CD4-positive, alpha-beta memory T cell (primary cell): ENCODE measurements at regions of chr6 and their contacts with region 1.

Region 1: GRCh38 chr6:125779924-125780539 is 10.7 kb upstream of the NCOA7 start:
- DNase-seq: peak; percentile 87 to 94 (median 92)
- H3K4me3 ChIP-seq: peak overlapping the region; percentile 69 to 92
- H3K4me3 Mint-ChIP-seq: no peak overlapping the region
- H3K27ac ChIP-seq: peak overlapping the region; percentile 72
- H3K27ac Mint-ChIP-seq: no peak overlapping the region
- H3K4me1 ChIP-seq: peaks cover 17% of the 10 kb centered on the region
- H3K4me1 Mint-ChIP-seq: peaks cover 10 to 13% (median 12%) of the 10 kb centered on the region in 4 donors
- H3K27me3 ChIP-seq: no peaks in the 10 kb centered on the region
- H3K27me3 Mint-ChIP-seq: no peaks in the 10 kb centered on the region

Region 2: GRCh38 chr6:125301435-125302391 is 478.3 kb before region 1 on chr6 and contains the start of gene HDDC2:
- CTCF ChIA-PET with region 1: interaction called, 6 read pairs
- POLR2A ChIA-PET with region 1: interaction called, 25 read pairs
- intact Hi-C with region 1: loop called (anchors 5 kb)
- DNase-seq: peak in 4 of 5 donors; percentile 32 to 43 (median 37)
- H3K4me3 ChIP-seq: peak within 1 kb of the TSS; percentile 44 to 62
- H3K4me3 Mint-ChIP-seq: peak within 1 kb of the TSS; percentile 82 to 97 (median 92)
- H3K27ac ChIP-seq: peak within 1 kb of the TSS; percentile 62
- H3K27ac Mint-ChIP-seq: peak within 1 kb of the TSS; percentile 78 to 97 (median 94)
- H3K4me1 ChIP-seq: peaks cover 47% of the 10 kb centered on the region
- H3K4me1 Mint-ChIP-seq: peaks cover 44 to 59% (median 54%) of the 10 kb centered on the region in 4 donors
- H3K27me3 ChIP-seq: no peaks in the 10 kb centered on the region
- H3K27me3 Mint-ChIP-seq: no peaks in the 10 kb centered on the region
- total RNA-seq, gene HDDC2: 49.5 to 53.5 TPM

Region 3: GRCh38 chr6:125834348-125834747 is 54.3 kb after region 1 on chr6:
- CTCF ChIA-PET with region 1: interaction called, 8 read pairs
- POLR2A ChIA-PET with region 1: interaction called, 25 read pairs
- intact Hi-C with region 1: loop called (anchors 2 kb)
- DNase-seq: peak in 4 of 5 donors; percentile 24 to 50 (median 38)
- H3K4me3 ChIP-seq: no peak overlapping the region
- H3K4me3 Mint-ChIP-seq: peak overlapping the region; percentile 16 to 78 (median 40)
- H3K27ac ChIP-seq: no peak overlapping the region
- H3K27ac Mint-ChIP-seq: peak overlapping the region; percentile 49 to 95 (median 81)
- H3K4me1 ChIP-seq: peaks cover 62% of the 10 kb centered on the region
- H3K4me1 Mint-ChIP-seq: peaks cover 54 to 78% (median 64%) of the 10 kb centered on the region in 4 donors
- H3K27me3 ChIP-seq: no peaks in the 10 kb centered on the region
- H3K27me3 Mint-ChIP-seq: no peaks in the 10 kb centered on the region

Region 4: DNA sequence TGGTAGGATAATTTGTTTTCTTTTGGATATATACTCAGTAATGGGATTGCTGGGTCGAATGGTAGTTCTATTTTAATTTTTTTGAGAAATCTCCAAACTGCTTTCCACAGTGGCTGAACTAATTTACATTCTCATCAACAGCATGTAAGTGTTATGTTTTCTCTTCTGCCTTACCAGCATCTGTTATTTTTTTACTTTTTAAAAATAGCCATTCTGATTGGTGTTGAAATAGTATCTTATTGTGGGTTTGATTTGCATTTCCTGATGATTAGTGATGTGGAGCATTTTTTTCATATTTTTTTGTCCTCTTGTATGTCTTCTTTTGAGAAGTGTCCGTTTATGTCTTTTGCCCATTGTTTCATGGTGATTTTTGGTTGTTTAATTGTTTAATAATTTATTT is 188.5 kb after region 1 on chr6:
- CTCF ChIA-PET with region 1: interaction called, 21 read pairs
- POLR2A ChIA-PET with region 1: interaction called, 7 read pairs
- intact Hi-C with region 1: no loop called
- DNase-seq: no peak
- H3K4me3 ChIP-seq: no peak overlapping the region
- H3K4me3 Mint-ChIP-seq: no peak overlapping the region
- H3K27ac ChIP-seq: no peak overlapping the region
- H3K27ac Mint-ChIP-seq: peak overlapping the region in 1 of 7 donors; percentile 70
- H3K4me1 ChIP-seq: no peaks in the 10 kb centered on the region
- H3K4me1 Mint-ChIP-seq: peaks cover 7 to 26% (median 21%) of the 10 kb centered on the region in 4 donors
- H3K27me3 ChIP-seq: no peaks in the 10 kb centered on the region
- H3K27me3 Mint-ChIP-seq: no peaks in the 10 kb centered on the region

Region 5: DNA sequence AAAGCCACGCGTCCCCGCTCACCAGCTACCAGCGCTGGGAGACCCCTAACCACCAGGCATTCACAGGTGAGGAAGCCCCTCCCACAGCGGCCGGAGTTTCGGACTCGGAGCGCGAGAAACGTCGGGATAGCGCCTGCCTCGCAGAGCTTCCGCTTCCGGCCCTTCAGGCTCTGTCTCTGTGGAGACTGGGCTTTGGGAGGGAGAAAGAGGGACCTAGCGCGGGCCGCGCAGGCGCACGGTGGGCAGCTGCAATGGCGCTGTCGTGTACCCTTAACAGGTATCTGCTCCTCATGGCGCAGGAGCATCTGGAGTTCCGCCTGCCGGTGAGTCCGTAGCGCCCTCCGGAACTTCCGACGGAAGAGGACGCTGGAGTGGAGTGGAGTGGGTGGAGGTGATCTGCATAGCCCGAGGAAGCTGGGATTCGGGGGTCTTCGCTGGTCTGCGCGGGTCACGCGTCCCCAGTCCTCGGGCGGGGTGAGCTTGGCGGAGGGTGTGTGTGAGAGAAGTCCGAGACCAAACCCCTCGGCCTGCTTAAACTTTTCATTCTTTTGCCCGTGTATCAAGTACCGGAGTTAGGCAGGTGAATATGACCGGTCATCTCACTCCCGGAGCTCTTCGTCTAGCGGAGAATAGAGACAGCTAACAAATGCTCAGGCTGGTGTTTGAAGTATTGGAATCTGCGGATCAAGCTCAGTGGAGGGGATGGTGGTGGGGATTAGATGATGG is 206.4 kb after region 1 on chr6 and contains the start of gene TRMT11:
- CTCF ChIA-PET with region 1: interaction called, 12 read pairs
- POLR2A ChIA-PET with region 1: interaction called, 34 read pairs
- intact Hi-C with region 1: loop called (anchors 1 kb)
- DNase-seq: peak; percentile 80 to 86 (median 81)
- H3K4me3 ChIP-seq: peak within 1 kb of the TSS; percentile 93 to 95
- H3K4me3 Mint-ChIP-seq: peak within 1 kb of the TSS; percentile 6 to 57 (median 24)
- H3K27ac ChIP-seq: peak within 1 kb of the TSS; percentile 77
- H3K27ac Mint-ChIP-seq: no peak within 1 kb of the TSS
- H3K4me1 ChIP-seq: peaks cover 31% of the 10 kb centered on the region
- H3K4me1 Mint-ChIP-seq: peaks cover 2 to 15% (median 8%) of the 10 kb centered on the region in 4 donors
- H3K27me3 ChIP-seq: no peaks in the 10 kb centered on the region
- H3K27me3 Mint-ChIP-seq: no peaks in the 10 kb centered on the region
- total RNA-seq, gene TRMT11: 25.5 to 30.8 TPM

Region 6: DNA sequence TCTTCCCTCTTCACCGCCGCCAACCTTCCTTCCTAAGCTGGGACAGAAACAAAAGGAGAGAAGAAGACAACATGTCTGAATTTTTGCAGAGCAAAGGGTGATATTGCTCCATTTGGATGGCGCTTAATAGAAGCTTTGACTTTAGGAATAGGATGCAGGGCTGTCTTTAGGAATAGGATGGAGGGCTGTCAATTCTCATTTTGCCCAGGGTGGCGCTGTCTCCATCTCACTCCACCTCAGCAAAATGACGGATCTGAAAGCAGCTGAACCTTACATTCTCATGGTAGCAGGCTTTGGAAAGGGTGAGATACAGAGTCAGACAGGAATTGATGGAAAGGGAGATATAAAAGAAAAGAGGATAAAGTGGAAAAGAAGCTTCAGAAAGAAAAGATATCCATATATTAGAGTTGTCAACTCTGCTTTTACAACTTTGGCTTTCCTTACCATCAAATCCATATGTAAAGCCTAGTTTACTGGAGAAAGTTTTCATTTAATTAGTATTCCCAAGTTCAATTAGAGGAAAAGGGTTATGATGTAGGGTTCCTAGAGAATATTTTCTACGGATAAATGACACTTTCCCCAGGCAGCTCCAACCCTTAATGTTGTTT is 1736.7 kb after region 1 on chr6:
- CTCF ChIA-PET with region 1: no interaction called
- POLR2A ChIA-PET with region 1: interaction called, 3 read pairs
- intact Hi-C with region 1: loop called (anchors 5 kb)
- DNase-seq: peak in 4 of 5 donors; percentile 51 to 60 (median 53)
- H3K4me3 ChIP-seq: peak overlapping the region; percentile 54 to 61
- H3K4me3 Mint-ChIP-seq: peak overlapping the region; percentile 83 to 96 (median 92)
- H3K27ac ChIP-seq: peak overlapping the region; percentile 50
- H3K27ac Mint-ChIP-seq: peak overlapping the region; percentile 43 to 93 (median 88)
- H3K4me1 ChIP-seq: peaks cover 40% of the 10 kb centered on the region
- H3K4me1 Mint-ChIP-seq: peaks cover 26 to 51% (median 38%) of the 10 kb centered on the region in 4 donors
- H3K27me3 ChIP-seq: peaks cover 16% of the 10 kb centered on the region
- H3K27me3 Mint-ChIP-seq: peaks cover 14 to 21% of the 10 kb centered on the region in 2 donors